Activated CD8-positive, alpha-beta T cell treated with anti-CD3 and anti-CD28 coated beads for 36 hours (primary cell): ENCODE measurements at regions of chr1 and their contacts with region 1.

Region 1: GRCh38 chr1:184805667-184806295 is 51.1 kb upstream of the EDEM3 start:
- DNase-seq: peak; percentile 91
- ATAC-seq: peak; percentile 97
- H3K4me3 Mint-ChIP-seq: no peak overlapping the region
- H3K27ac Mint-ChIP-seq: no peak overlapping the region
- H3K4me1 Mint-ChIP-seq: peaks cover 6% of the 10 kb centered on the region
- H3K27me3 Mint-ChIP-seq: no peaks in the 10 kb centered on the region
- CTCF ChIP-seq: peak; percentile 93

Region 2: GRCh38 chr1:184563308-184563707 is 242.5 kb before region 1 on chr1:
- CTCF ChIA-PET with region 1: no interaction called
- POLR2A ChIA-PET with region 1: no interaction called
- intact Hi-C with region 1: no loop called
- DNase-seq: no peak
- ATAC-seq: no peak
- H3K4me3 Mint-ChIP-seq: no peak overlapping the region
- H3K27ac Mint-ChIP-seq: no peak overlapping the region
- H3K4me1 Mint-ChIP-seq: no peaks in the 10 kb centered on the region
- H3K27me3 Mint-ChIP-seq: no peaks in the 10 kb centered on the region
- CTCF ChIP-seq: no peak

Region 3: GRCh38 chr1:184843732-184844495 is 38.1 kb after region 1 on chr1:
- CTCF ChIA-PET with region 1: interaction called, 10 read pairs
- POLR2A ChIA-PET with region 1: no interaction called
- intact Hi-C with region 1: no loop called
- DNase-seq: peak; percentile 70
- ATAC-seq: peak; percentile 70
- H3K4me3 Mint-ChIP-seq: no peak overlapping the region
- H3K27ac Mint-ChIP-seq: no peak overlapping the region
- H3K4me1 Mint-ChIP-seq: peaks cover 23% of the 10 kb centered on the region
- H3K27me3 Mint-ChIP-seq: no peaks in the 10 kb centered on the region
- CTCF ChIP-seq: no peak

Region 4: GRCh38 chr1:184941735-184942134 is 136.0 kb after region 1 on chr1:
- CTCF ChIA-PET with region 1: interaction called, 10 read pairs
- POLR2A ChIA-PET with region 1: no interaction called
- intact Hi-C with region 1: no loop called
- DNase-seq: peak; percentile 45
- ATAC-seq: peak; percentile 82
- H3K4me3 Mint-ChIP-seq: no peak overlapping the region
- H3K27ac Mint-ChIP-seq: no peak overlapping the region
- H3K4me1 Mint-ChIP-seq: peaks cover 25% of the 10 kb centered on the region
- H3K27me3 Mint-ChIP-seq: peaks cover 2% of the 10 kb centered on the region
- CTCF ChIP-seq: no peak

Region 5: GRCh38 chr1:184965944-184966860 is 160.4 kb after region 1 on chr1:
- CTCF ChIA-PET with region 1: interaction called, 65 read pairs
- POLR2A ChIA-PET with region 1: no interaction called
- intact Hi-C with region 1: no loop called
- DNase-seq: no peak
- ATAC-seq: peak; percentile 17
- H3K4me3 Mint-ChIP-seq: no peak overlapping the region
- H3K27ac Mint-ChIP-seq: no peak overlapping the region
- H3K4me1 Mint-ChIP-seq: peaks cover 27% of the 10 kb centered on the region
- H3K27me3 Mint-ChIP-seq: peaks cover 1% of the 10 kb centered on the region
- CTCF ChIP-seq: no peak

Region 6: GRCh38 chr1:184982002-184982954 is 176.5 kb after region 1 on chr1:
- CTCF ChIA-PET with region 1: interaction called, 232 read pairs
- POLR2A ChIA-PET with region 1: no interaction called
- intact Hi-C with region 1: loop called (anchors 1 kb)
- DNase-seq: peak; percentile 85
- ATAC-seq: peak; percentile 99
- H3K4me3 Mint-ChIP-seq: no peak overlapping the region
- H3K27ac Mint-ChIP-seq: no peak overlapping the region
- H3K4me1 Mint-ChIP-seq: peaks cover 5% of the 10 kb centered on the region
- H3K27me3 Mint-ChIP-seq: peaks cover 14% of the 10 kb centered on the region
- CTCF ChIP-seq: peak; percentile 93